A673 (cell line): ENCODE measurements at regions of chr20 and their contacts with region 1.

Region 1: GRCh38 chr20:34558320-34559218 is at the start of gene MAP1LC3A:
- DNase-seq: peak; percentile 96
- H3K4me3 ChIP-seq: peak within 1 kb of the TSS; percentile 92
- H3K27ac ChIP-seq: peak within 1 kb of the TSS; percentile 92
- H3K4me1 ChIP-seq: no peaks in the 10 kb centered on the region
- H3K27me3 ChIP-seq: no peaks in the 10 kb centered on the region
- CTCF ChIP-seq: no peak
- total RNA-seq, gene MAP1LC3A: 16.4 and 16.9 TPM in 2 replicates

Region 2: GRCh38 chr20:33947709-33948295 is 610.8 kb before region 1 on chr20:
- CTCF ChIA-PET with region 1: no interaction called
- POLR2A ChIA-PET with region 1: no interaction called
- intact Hi-C with region 1: no loop called
- DNase-seq: peak; percentile 75
- H3K4me3 ChIP-seq: no peak overlapping the region
- H3K27ac ChIP-seq: no peak overlapping the region
- H3K4me1 ChIP-seq: no peaks in the 10 kb centered on the region
- H3K27me3 ChIP-seq: no peaks in the 10 kb centered on the region
- CTCF ChIP-seq: peak; percentile 72

Region 3: DNA sequence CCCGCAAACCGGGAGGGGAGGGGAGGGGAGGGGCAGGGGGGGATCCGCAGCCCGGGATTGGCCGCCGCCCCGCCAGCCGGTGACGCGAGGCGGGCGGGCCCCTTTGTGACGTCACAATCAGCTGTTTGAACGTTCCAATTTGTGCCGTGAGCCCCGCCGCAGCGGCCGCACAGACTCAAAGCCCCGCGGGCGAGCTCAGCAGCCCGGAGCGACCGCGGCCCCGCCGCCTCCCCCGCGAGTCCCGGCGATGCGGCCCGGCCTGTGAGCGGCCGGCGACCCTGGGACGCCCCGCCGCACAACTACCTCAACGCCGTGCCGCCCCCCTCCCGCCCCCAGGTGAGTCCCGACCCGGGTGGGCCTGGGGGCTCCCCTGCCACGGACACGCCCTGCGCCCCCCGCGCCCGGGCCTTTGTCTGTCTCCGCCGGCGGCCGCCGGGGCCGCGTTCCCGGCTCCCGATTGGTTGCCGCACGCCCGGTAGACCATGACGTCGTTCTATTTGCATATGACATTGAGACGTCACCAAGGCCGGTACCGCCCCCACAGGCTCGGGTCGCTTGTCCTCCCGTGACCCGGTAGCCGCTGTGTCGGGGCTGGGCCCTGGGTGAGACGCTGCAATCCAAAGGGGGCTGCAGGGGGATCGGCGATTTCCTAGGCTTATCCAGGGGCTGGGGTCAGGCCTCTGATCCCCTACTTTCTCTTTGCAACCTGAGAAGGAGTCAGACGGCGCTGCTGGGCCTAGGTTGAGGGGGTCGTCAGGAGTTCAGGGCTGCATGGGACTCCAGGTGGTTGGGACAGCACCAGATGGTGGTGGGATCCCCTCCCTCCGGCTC is 145.8 kb after region 1 on chr20 and contains the start of gene TP53INP2:
- CTCF ChIA-PET with region 1: no interaction called
- POLR2A ChIA-PET with region 1: no interaction called
- intact Hi-C with region 1: loop called (anchors 5 kb)
- DNase-seq: peak; percentile 90
- H3K4me3 ChIP-seq: peak within 1 kb of the TSS; percentile 81
- H3K27ac ChIP-seq: peak within 1 kb of the TSS; percentile 99
- H3K4me1 ChIP-seq: peaks cover 12% of the 10 kb centered on the region
- H3K27me3 ChIP-seq: no peaks in the 10 kb centered on the region
- CTCF ChIP-seq: no peak
- total RNA-seq, gene TP53INP2: 7.2 and 8.4 TPM in 2 replicates

Region 4: GRCh38 chr20:34797012-34797995 is 238.7 kb after region 1 on chr20:
- CTCF ChIA-PET with region 1: no interaction called
- POLR2A ChIA-PET with region 1: no interaction called
- intact Hi-C with region 1: no loop called
- DNase-seq: no peak
- H3K4me3 ChIP-seq: no peak overlapping the region
- H3K27ac ChIP-seq: no peak overlapping the region
- H3K4me1 ChIP-seq: peaks cover 20% of the 10 kb centered on the region
- H3K27me3 ChIP-seq: no peaks in the 10 kb centered on the region
- CTCF ChIP-seq: no peak